AG04449 (cell line): ENCODE measurements at regions of chr11 and their contacts with region 1.

Region 1: DNA sequence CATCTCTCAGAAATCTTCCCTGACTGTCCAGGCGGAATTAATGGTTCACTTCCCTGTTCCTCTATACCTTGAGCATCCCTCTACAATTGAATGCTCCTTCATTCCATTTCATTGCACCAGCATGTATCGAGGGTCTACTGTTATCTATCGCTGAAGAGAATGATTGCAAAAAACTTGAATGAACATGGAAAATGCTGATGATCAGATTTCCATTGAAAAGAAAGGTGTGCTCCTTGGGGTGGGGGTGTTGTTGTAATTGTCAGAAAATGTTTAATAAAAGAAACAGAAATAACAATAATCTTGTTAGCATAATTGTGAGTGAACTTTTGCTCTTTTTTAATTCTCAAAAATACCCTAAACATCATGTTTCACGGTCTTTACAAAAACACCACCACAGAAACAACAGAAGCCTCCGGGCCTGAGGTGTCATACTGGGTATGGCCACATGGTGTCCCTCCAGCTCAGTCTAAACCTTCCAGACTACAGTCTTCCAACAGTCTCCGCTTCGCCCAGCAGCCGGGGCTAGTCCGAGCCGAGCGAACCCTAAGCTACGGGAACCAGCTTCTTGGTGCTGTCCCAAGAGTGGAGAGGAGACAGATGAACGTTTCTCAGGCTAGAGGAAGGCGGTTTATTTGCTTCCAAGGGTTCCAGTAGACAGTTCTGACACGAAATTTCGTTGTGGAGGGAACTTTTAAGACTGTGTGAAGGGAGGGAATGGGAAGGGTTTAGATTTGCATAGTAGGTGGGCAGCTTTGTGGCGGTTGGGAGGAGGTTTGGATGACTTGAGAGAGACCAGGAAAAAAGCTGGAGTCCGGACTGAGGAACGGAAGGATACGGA is 75.8 kb upstream of the ZBED5 start:
- DNase-seq: peak; percentile 73
- H3K4me3 ChIP-seq: peak overlapping the region; percentile 58
- CTCF ChIP-seq: peak; percentile 90

Region 2: GRCh38 chr11:10893714-10894151 is 39.9 kb before region 1 on chr11:
- CTCF ChIA-PET with region 1: interaction called, 10 read pairs
- POLR2A ChIA-PET with region 1: interaction called, 18 read pairs
- DNase-seq: no peak
- H3K4me3 ChIP-seq: no peak overlapping the region
- CTCF ChIP-seq: peak; percentile 29

Region 3: GRCh38 chr11:10899121-10899830 is 34.4 kb before region 1 on chr11:
- CTCF ChIA-PET with region 1: interaction called, 10 read pairs
- POLR2A ChIA-PET with region 1: interaction called, 18 read pairs
- DNase-seq: no peak
- H3K4me3 ChIP-seq: peak overlapping the region; percentile 35
- CTCF ChIP-seq: no peak

Region 4: DNA sequence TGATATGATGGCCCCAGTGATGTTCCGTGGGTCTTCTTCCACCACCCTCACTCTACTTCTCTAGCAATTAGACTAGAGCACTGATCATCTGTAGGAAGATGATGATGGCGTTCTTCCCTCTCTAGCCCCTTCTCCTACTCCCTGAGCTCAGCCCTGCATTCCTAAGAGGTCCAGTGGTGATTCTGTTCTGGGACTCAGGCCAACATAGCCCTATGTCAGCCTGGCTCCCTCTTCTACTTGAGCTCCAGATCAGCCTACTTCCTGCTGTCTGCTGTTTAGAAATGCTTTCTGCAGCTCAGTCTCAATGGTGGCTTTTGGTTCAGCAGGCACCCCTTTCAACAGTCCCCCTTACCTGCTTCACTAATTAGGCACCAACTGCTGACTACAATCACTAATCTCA is 10.3 kb after region 1 on chr11:
- CTCF ChIA-PET with region 1: interaction called, 48 read pairs
- POLR2A ChIA-PET with region 1: interaction called, 4 read pairs
- DNase-seq: no peak
- H3K4me3 ChIP-seq: no peak overlapping the region
- CTCF ChIP-seq: no peak

Region 5: DNA sequence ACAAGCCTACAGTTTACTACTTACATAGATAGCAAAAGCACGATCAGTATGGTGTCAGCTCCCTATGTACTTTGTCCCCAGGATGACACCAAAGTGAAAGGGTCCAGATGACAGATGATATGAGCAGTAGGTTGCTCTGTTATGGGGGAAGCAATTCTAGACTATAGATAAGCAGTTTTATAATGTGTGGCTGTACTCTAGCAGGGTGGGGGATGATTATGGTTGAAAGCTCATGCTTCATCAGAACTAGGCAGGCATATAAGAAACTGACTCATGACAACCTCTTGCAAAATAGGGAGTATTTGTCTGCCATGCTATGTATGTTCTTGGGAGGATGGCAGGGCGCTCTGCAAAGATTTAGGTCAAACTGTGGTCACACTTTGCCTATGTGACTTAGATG is 82.4 kb after region 1 on chr11:
- CTCF ChIA-PET with region 1: interaction called, 39 read pairs
- POLR2A ChIA-PET with region 1: no interaction called
- DNase-seq: no peak
- H3K4me3 ChIP-seq: no peak overlapping the region
- CTCF ChIP-seq: no peak

Region 6: GRCh38 chr11:11022125-11022730 is 88.6 kb after region 1 on chr11:
- CTCF ChIA-PET with region 1: interaction called, 152 read pairs
- POLR2A ChIA-PET with region 1: interaction called, 4 read pairs
- DNase-seq: no peak
- H3K4me3 ChIP-seq: no peak overlapping the region
- CTCF ChIP-seq: no peak

Region 7: GRCh38 chr11:11078344-11079086 is 144.8 kb after region 1 on chr11:
- CTCF ChIA-PET with region 1: interaction called, 11 read pairs
- POLR2A ChIA-PET with region 1: no interaction called
- DNase-seq: no peak
- H3K4me3 ChIP-seq: no peak overlapping the region
- CTCF ChIP-seq: no peak